Activated CD8-positive, alpha-beta T cell treated with anti-CD3 and anti-CD28 coated beads for 36 hours (primary cell): ENCODE measurements at regions of chr6 and their contacts with region 1.

Region 1: GRCh38 chr6:128725271-128726233 is 157.4 kb upstream of the LAMA2 start:
- DNase-seq: peak; percentile 36
- ATAC-seq: no peak
- H3K4me3 Mint-ChIP-seq: no peak overlapping the region
- H3K27ac Mint-ChIP-seq: no peak overlapping the region
- H3K4me1 Mint-ChIP-seq: peaks cover 3% of the 10 kb centered on the region
- H3K27me3 Mint-ChIP-seq: peaks cover 20% of the 10 kb centered on the region
- CTCF ChIP-seq: peak; percentile 87

Region 2: DNA sequence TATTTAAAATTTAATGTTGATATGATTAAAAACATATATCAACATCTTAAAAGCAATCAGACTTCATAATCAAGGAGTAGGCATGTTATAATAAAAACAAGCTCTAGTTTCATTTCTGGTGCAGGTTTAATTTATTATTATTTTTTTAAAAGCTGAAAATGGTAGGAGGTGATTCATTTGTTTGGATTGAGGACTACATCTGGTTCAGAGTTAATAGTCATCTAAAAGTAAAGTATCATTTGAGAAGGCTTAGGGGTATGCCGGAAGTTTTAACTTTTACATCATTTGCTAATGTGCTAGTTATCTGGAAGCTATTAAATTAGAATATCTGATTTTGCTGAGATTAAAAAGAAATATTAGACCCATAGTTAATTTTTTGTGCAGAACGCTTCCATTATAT is 12.1 kb before region 1 on chr6:
- CTCF ChIA-PET with region 1: interaction called, 27 read pairs
- POLR2A ChIA-PET with region 1: no interaction called
- intact Hi-C with region 1: no loop called
- DNase-seq: no peak
- ATAC-seq: no peak
- H3K4me3 Mint-ChIP-seq: no peak overlapping the region
- H3K27ac Mint-ChIP-seq: no peak overlapping the region
- H3K4me1 Mint-ChIP-seq: no peaks in the 10 kb centered on the region
- H3K27me3 Mint-ChIP-seq: peaks cover 21% of the 10 kb centered on the region
- CTCF ChIP-seq: no peak

Region 3: GRCh38 chr6:128899341-128900050 is 173.9 kb after region 1 on chr6:
- CTCF ChIA-PET with region 1: no interaction called
- POLR2A ChIA-PET with region 1: no interaction called
- intact Hi-C with region 1: no loop called
- DNase-seq: no peak
- ATAC-seq: no peak
- H3K4me3 Mint-ChIP-seq: no peak overlapping the region
- H3K27ac Mint-ChIP-seq: no peak overlapping the region
- H3K4me1 Mint-ChIP-seq: no peaks in the 10 kb centered on the region
- H3K27me3 Mint-ChIP-seq: no peaks in the 10 kb centered on the region
- CTCF ChIP-seq: no peak